Right cardiac atrium (tissue), 5 donors: ENCODE measurements at regions of chr17 and their contacts with region 1.

Region 1: GRCh38 chr17:76072148-76072858 is at the start of gene SRP68:
- DNase-seq: peak; percentile 93 to 97 (median 97)
- ATAC-seq: peak; percentile 99 to 100
- H3K4me3 ChIP-seq: peak within 1 kb of the TSS; percentile 76
- H3K27ac ChIP-seq: peak within 1 kb of the TSS; percentile 26
- H3K4me1 ChIP-seq: no peaks in the 10 kb centered on the region
- H3K27me3 ChIP-seq: no peaks in the 10 kb centered on the region
- total RNA-seq, gene SRP68: 59.9 to 63.5 (median 61.5) TPM

Region 2: DNA sequence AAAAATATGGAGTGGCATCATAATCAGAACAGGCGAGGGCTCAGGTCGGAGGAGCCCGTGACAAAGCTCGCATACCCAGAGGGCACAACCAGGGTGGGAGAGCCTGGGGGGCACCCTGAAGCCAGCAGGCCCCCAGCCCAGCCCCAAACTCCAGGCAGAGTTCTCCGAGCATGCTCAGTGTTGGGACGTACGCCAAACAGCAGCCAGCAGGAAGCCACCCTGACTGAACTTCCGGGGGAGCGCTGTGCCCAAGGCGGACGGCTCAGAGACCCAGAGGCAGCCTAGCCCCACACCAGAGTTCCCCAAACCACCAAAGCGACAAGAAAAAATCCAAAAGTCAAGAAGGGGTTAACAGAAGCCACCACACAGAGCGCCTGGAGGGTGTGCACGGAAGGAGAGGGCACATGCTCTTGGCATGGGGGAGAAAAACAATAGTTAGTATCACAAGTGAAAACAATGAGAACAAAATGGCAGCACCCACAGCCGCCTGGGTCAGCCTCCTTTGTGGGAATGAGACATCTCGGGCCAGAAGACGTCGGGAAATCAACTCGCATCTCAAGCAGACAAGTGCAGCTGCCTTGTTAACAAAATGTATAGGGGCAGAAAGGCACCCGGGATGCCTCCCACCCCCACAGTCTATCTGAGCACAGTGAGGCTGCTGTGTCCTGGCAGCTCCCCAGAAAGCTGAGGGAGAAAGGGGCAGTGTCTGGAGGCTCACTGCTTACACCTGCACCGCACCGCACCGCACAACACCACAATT is 19.4 kb after region 1 on chr17:
- intact Hi-C with region 1: loop called in 1 of 4 experiments (anchors 2 kb)
- DNase-seq: no peak
- ATAC-seq: peak in 1 of 2 donors; percentile 5
- H3K4me3 ChIP-seq: no peak overlapping the region
- H3K27ac ChIP-seq: no peak overlapping the region
- H3K4me1 ChIP-seq: no peaks in the 10 kb centered on the region
- H3K27me3 ChIP-seq: no peaks in the 10 kb centered on the region